ENCODE measurements at regions of chr14 and their contacts with region 1.

Region 1: DNA sequence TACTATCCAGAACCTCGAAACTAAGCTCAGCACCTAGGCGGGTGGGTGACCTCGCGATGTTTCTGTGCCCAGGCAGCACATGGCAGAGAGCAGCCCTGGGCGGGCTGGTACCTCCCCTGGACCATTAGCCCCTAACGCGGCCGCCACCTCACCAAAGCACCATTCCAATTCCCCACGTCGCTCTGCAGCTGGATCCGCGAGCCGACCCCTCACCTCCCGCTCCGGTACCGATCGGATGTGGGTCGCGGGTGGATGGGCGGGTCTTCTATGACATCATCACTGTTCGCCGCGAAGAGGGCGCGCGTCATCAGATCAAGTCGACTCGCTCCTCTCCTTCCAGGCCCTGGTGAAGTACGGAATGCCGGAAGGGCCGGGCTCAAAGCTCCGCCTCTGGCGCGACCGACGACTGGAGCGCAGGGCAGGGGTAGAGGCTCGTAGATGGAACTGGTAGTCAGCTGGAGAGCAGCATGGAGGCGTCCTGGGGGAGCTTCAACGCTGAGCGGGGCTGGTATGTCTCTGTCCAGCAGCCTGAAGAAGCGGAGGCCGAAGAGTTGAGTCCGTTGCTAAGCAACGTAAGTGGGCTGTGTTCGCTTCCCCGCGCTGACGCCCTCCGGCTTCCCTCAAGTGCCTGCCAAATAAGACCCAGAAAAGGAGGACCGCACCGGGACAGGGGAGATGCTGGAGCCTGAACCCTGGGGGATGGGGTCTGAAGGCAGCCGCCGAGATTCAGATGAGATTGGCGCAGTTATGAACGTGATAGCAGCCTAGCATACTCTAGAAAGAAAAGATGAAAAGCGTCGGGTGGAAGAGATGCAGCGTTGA is at the starts of genes SLC38A6 and TRMT5:
- DNase-seq: peak; percentile 95
- H3K4me3 Mint-ChIP-seq: no peak within 1 kb of the TSS
- H3K27ac Mint-ChIP-seq: no peak within 1 kb of the TSS
- H3K4me1 Mint-ChIP-seq: peaks cover 31% of the 10 kb centered on the region
- H3K27me3 Mint-ChIP-seq: no peaks in the 10 kb centered on the region
- total RNA-seq, gene SLC38A6: 4.1 to 4.3 TPM
- total RNA-seq, gene TRMT5: 13.9 to 18.3 TPM

Region 2: GRCh38 chr14:60656686-60657455 is 324.2 kb before region 1 on chr14:
- CTCF ChIA-PET with region 1: no interaction called
- intact Hi-C with region 1: loop called (anchors 2 kb)
- DNase-seq: peak; percentile 39
- H3K4me3 Mint-ChIP-seq: peak overlapping the region; percentile 75
- H3K27ac Mint-ChIP-seq: no peak overlapping the region
- H3K4me1 Mint-ChIP-seq: peaks cover 39% of the 10 kb centered on the region
- H3K27me3 Mint-ChIP-seq: peaks cover 79% of the 10 kb centered on the region

Region 3: DNA sequence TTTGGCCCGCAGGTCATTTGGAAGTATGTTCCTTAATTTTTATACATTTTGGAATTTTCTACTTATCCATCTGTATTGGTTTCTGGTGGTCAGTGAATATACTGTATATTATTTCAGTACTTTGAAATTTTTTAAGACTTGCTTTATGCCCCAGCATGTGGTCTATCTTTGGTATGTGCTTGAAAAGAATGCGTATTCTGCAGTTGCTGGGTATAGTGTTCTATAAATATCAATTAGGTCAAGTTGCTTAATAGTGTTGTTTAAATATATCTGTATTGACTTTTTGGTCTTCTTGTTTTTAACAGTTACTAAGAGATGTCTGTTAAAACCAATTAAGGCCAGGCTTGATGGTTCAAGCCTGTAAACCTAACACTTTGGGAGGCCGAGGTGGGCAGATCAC is 310.0 kb before region 1 on chr14:
- CTCF ChIA-PET with region 1: no interaction called
- intact Hi-C with region 1: no loop called
- DNase-seq: no peak
- H3K4me3 Mint-ChIP-seq: no peak overlapping the region
- H3K27ac Mint-ChIP-seq: no peak overlapping the region
- H3K4me1 Mint-ChIP-seq: no peaks in the 10 kb centered on the region
- H3K27me3 Mint-ChIP-seq: peaks cover 6% of the 10 kb centered on the region

Region 4: DNA sequence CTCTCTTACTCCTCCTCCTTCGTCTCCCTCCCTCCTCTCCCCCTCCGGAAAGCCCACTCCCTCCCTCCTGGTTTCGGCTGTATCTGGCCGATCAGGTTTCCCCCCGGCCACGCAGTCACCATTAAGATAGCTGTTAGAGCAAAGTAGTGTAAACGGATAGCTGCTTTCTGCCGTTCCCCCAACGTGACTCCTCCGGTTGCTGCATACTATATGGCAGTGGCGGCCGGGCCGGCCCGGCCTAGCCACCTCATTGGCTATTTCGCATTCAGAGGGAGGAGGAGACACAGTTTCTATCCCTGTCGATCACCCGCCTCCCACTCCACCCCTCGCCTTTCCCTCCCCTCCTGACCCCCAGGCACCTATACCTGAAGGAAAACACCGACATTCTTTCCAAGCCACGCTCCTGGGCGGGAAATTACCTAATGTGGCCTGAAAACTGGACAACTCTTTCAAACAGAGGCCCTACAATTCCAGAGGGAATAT is 256.8 kb before region 1 on chr14 and contains the start of gene SIX4:
- CTCF ChIA-PET with region 1: no interaction called
- intact Hi-C with region 1: loop called (anchors 1 kb)
- DNase-seq: peak; percentile 15
- H3K4me3 Mint-ChIP-seq: peak within 1 kb of the TSS; percentile 78
- H3K27ac Mint-ChIP-seq: no peak within 1 kb of the TSS
- H3K4me1 Mint-ChIP-seq: peaks cover 19% of the 10 kb centered on the region
- H3K27me3 Mint-ChIP-seq: peaks cover 71% of the 10 kb centered on the region
- total RNA-seq, gene SIX4: not detected

Region 5: GRCh38 chr14:60734465-60735242 is 246.4 kb before region 1 on chr14 and contains the start of gene MNAT1:
- CTCF ChIA-PET with region 1: no interaction called
- intact Hi-C with region 1: loop called (anchors 1 kb)
- DNase-seq: peak; percentile 83
- H3K4me3 Mint-ChIP-seq: peak within 1 kb of the TSS; percentile 97
- H3K27ac Mint-ChIP-seq: peak within 1 kb of the TSS; percentile 86
- H3K4me1 Mint-ChIP-seq: peaks cover 17% of the 10 kb centered on the region
- H3K27me3 Mint-ChIP-seq: peaks cover 10% of the 10 kb centered on the region
- total RNA-seq, gene MNAT1: 44.0 to 44.2 TPM

Region 6: DNA sequence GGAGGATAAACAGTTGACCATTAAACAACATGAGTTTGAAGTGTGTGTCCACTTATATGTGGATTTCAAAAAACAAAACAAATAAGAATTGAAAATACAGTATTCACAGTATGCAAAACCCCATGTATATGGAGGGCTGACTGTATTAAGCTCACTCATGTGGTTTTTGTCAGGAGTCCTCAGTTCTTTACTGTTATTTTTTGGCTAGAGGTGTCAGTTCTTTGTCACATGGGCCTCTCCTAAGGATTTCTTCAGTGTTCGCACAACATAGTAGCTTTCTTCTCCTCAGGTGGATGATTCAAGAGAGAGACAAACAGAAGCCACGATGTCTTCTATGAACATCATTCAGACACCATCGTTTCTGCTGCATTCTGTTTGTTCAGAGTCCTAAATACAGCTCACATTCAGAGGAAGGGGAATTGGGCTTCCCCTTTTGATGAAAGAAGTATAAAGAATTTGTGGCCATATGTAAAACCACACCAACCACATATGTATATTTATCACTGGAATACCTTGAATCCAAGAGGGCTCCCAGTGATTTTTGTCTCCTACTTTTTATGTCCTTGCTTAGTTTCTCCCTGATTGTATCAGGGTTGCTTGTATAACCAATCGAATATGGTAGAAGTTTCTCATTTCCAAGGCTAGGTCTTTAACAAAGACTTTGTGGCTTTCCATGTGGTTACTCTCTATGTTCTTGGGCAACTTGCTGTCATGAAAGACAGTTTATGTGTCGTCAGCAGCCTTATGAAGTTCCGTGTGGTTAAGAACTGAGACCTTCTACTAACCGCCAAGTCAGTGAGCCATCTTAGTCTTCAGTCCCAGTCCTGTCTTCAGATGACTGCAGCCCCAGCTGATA is 227.5 kb before region 1 on chr14:
- CTCF ChIA-PET with region 1: no interaction called
- intact Hi-C with region 1: loop called (anchors 1 kb)
- DNase-seq: peak; percentile 78
- H3K4me3 Mint-ChIP-seq: peak overlapping the region; percentile 14
- H3K27ac Mint-ChIP-seq: peak overlapping the region; percentile 37
- H3K4me1 Mint-ChIP-seq: peaks cover 35% of the 10 kb centered on the region
- H3K27me3 Mint-ChIP-seq: peaks cover 2% of the 10 kb centered on the region

Region 7: GRCh38 chr14:61280526-61281185 is 299.6 kb after region 1 on chr14:
- CTCF ChIA-PET with region 1: interaction called, 4 read pairs
- intact Hi-C with region 1: loop called (anchors 1 kb)
- DNase-seq: peak; percentile 81
- H3K4me3 Mint-ChIP-seq: peak overlapping the region; percentile 88
- H3K27ac Mint-ChIP-seq: peak overlapping the region; percentile 67
- H3K4me1 Mint-ChIP-seq: peaks cover 29% of the 10 kb centered on the region
- H3K27me3 Mint-ChIP-seq: no peaks in the 10 kb centered on the region

Region 8: DNA sequence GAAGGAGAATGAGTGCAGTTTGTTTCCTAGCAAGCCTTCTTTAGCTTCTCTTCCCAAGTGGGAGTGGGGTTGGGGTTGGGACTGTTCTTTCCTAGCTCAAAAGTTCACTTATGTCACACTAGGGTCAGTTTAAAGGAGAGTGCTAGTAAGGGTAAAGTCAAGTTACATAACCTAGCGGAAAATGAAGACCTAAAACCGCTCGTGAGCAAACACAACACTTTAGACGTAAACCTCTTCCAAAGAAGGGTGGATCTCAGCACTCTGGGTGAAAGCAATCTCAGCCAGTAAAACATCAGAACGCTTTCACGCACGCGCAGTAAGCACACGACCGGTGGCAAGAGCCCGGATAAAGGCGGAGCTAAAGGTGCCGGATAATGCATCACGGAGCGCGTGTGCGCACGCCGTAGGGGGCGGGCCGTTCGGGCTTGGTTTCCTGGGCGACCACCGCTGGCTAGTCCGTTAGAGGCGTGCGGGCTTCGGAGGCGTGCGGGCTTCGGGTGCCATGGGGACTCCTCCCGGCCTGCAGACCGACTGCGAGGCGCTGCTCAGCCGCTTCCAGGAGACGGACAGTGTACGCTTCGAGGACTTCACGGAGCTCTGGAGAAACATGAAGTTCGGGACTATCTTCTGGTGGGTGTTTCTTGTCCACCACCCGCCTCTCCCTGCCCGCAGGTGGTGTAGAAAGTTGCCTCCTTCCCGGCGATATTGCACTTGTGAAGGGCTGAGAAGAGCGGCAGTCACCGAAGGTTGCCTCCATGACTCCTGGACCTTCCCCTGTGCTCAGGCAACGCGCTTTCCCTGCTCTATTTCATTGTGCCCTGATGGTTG is 781.2 kb after region 1 on chr14 and contains the start of gene SNAPC1:
- CTCF ChIA-PET with region 1: no interaction called
- intact Hi-C with region 1: loop called (anchors 2 kb)
- DNase-seq: peak; percentile 99
- H3K4me3 Mint-ChIP-seq: peak within 1 kb of the TSS; percentile 97
- H3K27ac Mint-ChIP-seq: peak within 1 kb of the TSS; percentile 96
- H3K4me1 Mint-ChIP-seq: peaks cover 40% of the 10 kb centered on the region
- H3K27me3 Mint-ChIP-seq: no peaks in the 10 kb centered on the region
- total RNA-seq, gene SNAPC1: 8.7 to 9.2 TPM